Caco-2 (cell line): ENCODE measurements at regions of chr11 and their contacts with region 1.

Region 1: DNA sequence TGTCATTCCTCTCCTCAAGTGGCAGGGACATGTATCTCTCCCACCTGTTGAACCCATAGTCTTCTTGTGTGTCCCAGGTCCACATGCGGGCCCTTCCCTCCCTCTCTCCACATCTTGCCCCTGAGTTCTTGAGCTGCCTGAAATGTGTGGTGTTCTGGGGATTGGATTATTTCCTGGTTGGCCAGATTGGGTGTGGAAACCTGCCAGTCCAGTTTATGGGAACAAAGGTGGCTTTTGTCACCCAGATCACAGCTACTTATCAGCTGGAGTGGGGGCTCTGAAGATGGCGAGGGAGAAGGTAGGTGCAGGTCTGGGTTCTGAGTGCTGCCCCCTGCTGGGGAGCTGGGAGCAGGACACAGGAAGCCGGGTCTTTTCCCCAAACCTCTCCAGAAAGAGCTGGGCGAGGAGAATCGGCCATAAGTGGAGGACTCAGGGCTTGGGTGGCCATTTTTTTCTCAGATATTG is 14.2 kb downstream of the DTX4 start:
- DNase-seq: peak; percentile 95 to 96
- H3K4me3 ChIP-seq: peak overlapping the region; percentile 13
- H3K4me3 Mint-ChIP-seq: peak overlapping the region; percentile 76
- H3K27ac Mint-ChIP-seq: peak overlapping the region; percentile 93
- H3K4me1 ChIP-seq: peaks cover 81% of the 10 kb centered on the region
- H3K4me1 Mint-ChIP-seq: peaks cover 52% of the 10 kb centered on the region
- H3K27me3 ChIP-seq: no peaks in the 10 kb centered on the region
- H3K27me3 Mint-ChIP-seq: no peaks in the 10 kb centered on the region
- CTCF ChIP-seq: peak; percentile 94 to 95

Region 2: DNA sequence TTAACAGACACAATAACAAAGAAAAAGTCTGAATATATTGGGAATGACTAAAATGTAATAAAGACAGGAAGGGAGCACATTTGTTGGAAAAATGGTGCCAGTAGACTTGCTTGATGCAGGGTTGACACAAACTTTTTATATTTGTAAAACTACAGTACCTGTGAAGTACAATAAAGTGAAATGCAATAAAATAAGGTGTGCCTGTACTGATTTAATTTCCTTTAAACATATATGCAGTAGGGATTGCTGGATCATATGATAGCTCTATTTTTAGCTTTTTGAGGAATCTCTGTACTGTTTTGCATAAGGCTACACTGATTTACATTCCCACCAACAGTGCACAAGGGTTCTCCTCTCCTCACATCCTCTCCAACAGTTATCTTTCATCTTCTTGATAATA is 329.4 kb before region 1 on chr11:
- CTCF ChIA-PET with region 1: no interaction called
- POLR2A ChIA-PET with region 1: no interaction called
- intact Hi-C with region 1: no loop called
- DNase-seq: no peak
- H3K4me3 ChIP-seq: no peak overlapping the region
- H3K4me3 Mint-ChIP-seq: no peak overlapping the region
- H3K27ac Mint-ChIP-seq: no peak overlapping the region
- H3K4me1 ChIP-seq: no peaks in the 10 kb centered on the region
- H3K4me1 Mint-ChIP-seq: no peaks in the 10 kb centered on the region
- H3K27me3 ChIP-seq: no peaks in the 10 kb centered on the region
- H3K27me3 Mint-ChIP-seq: no peaks in the 10 kb centered on the region
- CTCF ChIP-seq: no peak

Region 3: DNA sequence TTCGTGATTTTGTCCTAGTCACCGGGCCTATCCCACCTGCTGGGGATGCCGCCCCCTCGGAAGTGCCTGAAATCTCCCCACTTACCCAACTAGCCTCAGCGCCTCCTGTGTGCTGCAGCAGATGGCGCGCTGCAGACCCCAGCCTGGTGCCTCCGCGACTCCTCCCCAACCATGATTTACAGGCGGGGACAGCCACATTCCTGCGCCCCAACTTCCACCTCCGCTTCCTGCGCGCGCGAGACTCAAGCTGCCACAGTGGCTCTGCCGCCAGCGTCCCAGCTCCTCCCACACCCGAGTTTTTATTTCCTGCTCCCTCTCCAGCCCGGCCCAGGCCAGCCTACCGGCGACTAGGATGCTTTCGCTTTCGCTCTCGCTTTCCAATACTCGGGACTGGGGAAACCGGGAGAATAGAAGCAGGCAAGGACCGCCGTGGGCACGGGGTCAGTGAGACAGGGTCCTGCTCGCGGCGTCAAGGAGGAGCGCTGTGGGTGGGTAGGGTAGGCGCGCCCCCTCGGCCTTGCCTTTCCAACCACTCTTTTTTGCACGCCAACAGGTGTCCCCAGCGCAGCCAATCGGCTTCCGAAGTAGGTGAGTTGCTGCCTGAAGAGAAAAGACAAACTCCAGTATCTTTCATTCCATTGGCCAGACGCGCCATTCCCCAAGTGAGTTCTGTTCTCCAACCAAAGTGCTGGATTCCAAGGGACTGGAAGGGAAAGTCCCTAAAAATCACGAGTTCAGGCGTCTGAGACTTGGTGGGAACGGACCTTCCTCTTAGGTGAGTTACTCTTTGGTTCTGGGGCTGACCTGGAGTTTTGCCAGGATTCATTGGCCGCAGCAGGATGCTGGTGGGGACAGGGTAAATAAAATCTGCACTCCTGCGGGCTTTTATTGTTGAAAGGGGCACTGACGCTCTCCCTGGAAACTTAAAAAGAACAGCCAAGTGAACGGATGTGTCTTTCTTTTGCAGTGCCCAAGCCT is 43.3 kb before region 1 on chr11 and contains the start of gene FAM111A:
- CTCF ChIA-PET with region 1: interaction called, 10 read pairs
- POLR2A ChIA-PET with region 1: no interaction called
- intact Hi-C with region 1: loop called (anchors 1 kb)
- DNase-seq: peak; percentile 92 to 95
- H3K4me3 ChIP-seq: peak within 1 kb of the TSS; percentile 55
- H3K4me3 Mint-ChIP-seq: peak within 1 kb of the TSS; percentile 98
- H3K27ac Mint-ChIP-seq: peak within 1 kb of the TSS; percentile 94
- H3K4me1 ChIP-seq: peaks cover 21% of the 10 kb centered on the region
- H3K4me1 Mint-ChIP-seq: peaks cover 45% of the 10 kb centered on the region
- H3K27me3 ChIP-seq: no peaks in the 10 kb centered on the region
- H3K27me3 Mint-ChIP-seq: no peaks in the 10 kb centered on the region
- CTCF ChIP-seq: peak in 1 of 2 experiments; percentile 75
- total RNA-seq, gene FAM111A: 76.1 and 78.8 TPM in 2 replicates

Region 4: DNA sequence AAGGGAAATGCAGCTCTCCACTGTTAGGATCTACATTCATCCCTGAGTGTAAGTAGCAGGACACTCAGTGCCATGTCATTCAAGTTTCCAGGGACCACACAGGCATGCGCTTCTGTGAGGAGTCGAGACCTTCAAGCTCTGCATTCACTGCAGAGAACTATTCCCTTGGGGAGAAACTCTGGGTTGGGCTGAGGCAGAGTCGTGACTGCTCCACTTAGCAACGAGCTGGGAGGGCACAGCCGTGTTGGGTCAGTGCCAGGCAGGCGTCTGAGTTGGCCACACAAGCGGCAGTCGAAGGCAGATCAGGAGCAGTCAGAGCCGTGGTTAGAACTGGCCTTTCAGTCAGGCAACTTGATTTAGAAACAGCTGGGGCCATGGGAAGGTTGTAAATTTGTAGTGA is 11.8 kb after region 1 on chr11:
- CTCF ChIA-PET with region 1: interaction called, 24 read pairs
- POLR2A ChIA-PET with region 1: no interaction called
- intact Hi-C with region 1: loop called (anchors 2 kb)
- DNase-seq: no peak
- H3K4me3 ChIP-seq: no peak overlapping the region
- H3K4me3 Mint-ChIP-seq: no peak overlapping the region
- H3K27ac Mint-ChIP-seq: peak overlapping the region; percentile 36
- H3K4me1 ChIP-seq: peaks cover 6% of the 10 kb centered on the region
- H3K4me1 Mint-ChIP-seq: peaks cover 27% of the 10 kb centered on the region
- H3K27me3 ChIP-seq: no peaks in the 10 kb centered on the region
- H3K27me3 Mint-ChIP-seq: no peaks in the 10 kb centered on the region
- CTCF ChIP-seq: no peak

Region 5: DNA sequence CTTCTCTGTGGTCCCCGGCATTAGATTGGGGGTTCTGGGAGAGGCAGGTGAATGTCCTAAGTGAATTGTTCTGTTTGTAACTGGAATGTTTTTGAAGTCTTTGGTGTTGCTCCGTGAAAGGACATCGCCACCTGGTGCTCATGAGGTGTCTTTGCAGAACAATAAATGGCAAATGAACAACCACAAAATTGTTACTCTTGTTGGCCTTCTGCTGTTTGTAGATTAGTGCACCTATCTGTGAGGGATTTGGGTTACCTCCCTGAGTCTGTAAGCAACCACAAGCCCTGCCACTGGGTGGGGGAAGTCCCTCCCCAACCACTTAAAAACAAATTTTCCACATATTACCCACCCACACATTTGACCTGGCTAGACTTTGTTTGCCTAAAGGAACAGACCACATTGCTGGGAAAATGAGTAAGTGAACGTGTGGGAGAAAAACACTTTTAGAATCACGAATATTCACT is 21.9 kb after region 1 on chr11:
- CTCF ChIA-PET with region 1: interaction called, 24 read pairs
- POLR2A ChIA-PET with region 1: interaction called, 3 read pairs
- intact Hi-C with region 1: loop called (anchors 1 kb)
- DNase-seq: peak in 1 of 2 experiments; percentile 40
- H3K4me3 ChIP-seq: no peak overlapping the region
- H3K4me3 Mint-ChIP-seq: no peak overlapping the region
- H3K27ac Mint-ChIP-seq: no peak overlapping the region
- H3K4me1 ChIP-seq: no peaks in the 10 kb centered on the region
- H3K4me1 Mint-ChIP-seq: peaks cover 6% of the 10 kb centered on the region
- H3K27me3 ChIP-seq: no peaks in the 10 kb centered on the region
- H3K27me3 Mint-ChIP-seq: no peaks in the 10 kb centered on the region
- CTCF ChIP-seq: peak; percentile 59 to 80

Region 6: GRCh38 chr11:59283825-59284772 is 97.9 kb after region 1 on chr11:
- CTCF ChIA-PET with region 1: no interaction called
- POLR2A ChIA-PET with region 1: no interaction called
- intact Hi-C with region 1: loop called (anchors 1 kb)
- DNase-seq: peak in 1 of 2 experiments; percentile 47
- H3K4me3 ChIP-seq: no peak overlapping the region
- H3K4me3 Mint-ChIP-seq: no peak overlapping the region
- H3K27ac Mint-ChIP-seq: no peak overlapping the region
- H3K4me1 ChIP-seq: no peaks in the 10 kb centered on the region
- H3K4me1 Mint-ChIP-seq: no peaks in the 10 kb centered on the region
- H3K27me3 ChIP-seq: no peaks in the 10 kb centered on the region
- H3K27me3 Mint-ChIP-seq: peaks cover 5% of the 10 kb centered on the region
- CTCF ChIP-seq: peak; percentile 84 to 88